ENCODE measurements at regions of chrX and their contacts with region 1.

Region 1: DNA sequence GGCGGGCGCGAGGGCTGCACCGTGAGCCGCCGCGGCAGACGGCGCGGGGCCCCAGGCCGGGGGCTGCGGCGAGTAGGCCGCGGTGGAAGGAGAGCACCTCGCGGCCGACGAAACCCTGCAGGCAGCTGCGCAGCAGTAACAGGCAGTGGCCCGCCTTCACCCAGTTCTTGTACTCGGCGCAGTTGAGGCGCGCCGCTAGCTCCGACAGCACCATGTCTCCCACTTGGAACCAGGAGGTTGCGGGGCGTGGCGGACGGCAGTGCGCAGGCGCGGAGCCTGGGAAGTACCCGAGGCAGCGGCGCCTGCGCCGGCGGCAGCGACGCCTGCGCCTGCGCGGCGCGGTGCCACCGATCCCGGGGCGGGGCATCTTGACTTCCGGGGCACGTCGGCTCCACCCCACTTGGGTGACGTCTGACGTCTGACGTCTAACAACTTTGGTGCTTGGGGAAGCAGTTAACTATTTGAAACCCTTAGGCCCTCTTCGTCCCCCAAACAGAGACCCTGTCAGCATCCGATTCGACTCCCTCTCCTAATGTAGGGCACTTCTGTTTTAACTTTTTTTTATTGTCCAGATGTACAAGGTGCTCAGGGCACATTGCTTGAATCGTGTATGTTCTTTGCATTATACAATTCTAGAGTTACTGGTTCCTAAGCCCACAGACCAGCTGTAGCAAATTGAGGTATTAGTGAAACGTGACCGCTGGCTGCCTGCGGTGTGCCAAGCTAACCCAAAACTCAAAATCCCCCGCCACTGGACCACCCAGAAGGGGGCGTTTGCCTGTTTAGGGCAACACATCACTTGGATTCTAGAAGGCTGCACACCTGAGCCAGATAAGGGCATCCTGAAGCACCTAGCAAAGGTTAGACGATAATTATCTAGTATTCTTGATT is at the start of gene CXorf38:
- DNase-seq: peak; percentile 57 to 84
- H3K4me3 ChIP-seq: peak within 1 kb of the TSS; percentile 62
- H3K27ac ChIP-seq: peak within 1 kb of the TSS; percentile 39; the same call in 1 of the 2 replicates
- H3K4me1 ChIP-seq: no peaks in the 10 kb centered on the region
- H3K27me3 ChIP-seq: no peaks in the 10 kb centered on the region
- CTCF ChIP-seq: no peak
- total RNA-seq, gene CXorf38: 5.3 and 8.1 TPM in 2 replicates

Region 2: GRCh38 chrX:40539214-40540142 is 108.1 kb before region 1 on chrX:
- CTCF ChIA-PET with region 1: interaction called, 3 read pairs
- POLR2A ChIA-PET with region 1: no interaction called
- intact Hi-C with region 1: loop called (anchors 10 kb)
- DNase-seq: no peak
- H3K4me3 ChIP-seq: no peak overlapping the region
- H3K27ac ChIP-seq: no peak overlapping the region
- H3K4me1 ChIP-seq: no peaks in the 10 kb centered on the region
- H3K27me3 ChIP-seq: no peaks in the 10 kb centered on the region
- CTCF ChIP-seq: no peak

Region 3: GRCh38 chrX:40622479-40623138 is 24.9 kb before region 1 on chrX:
- CTCF ChIA-PET with region 1: no interaction called
- POLR2A ChIA-PET with region 1: no interaction called
- intact Hi-C with region 1: no loop called
- DNase-seq: no peak
- H3K4me3 ChIP-seq: no peak overlapping the region
- H3K27ac ChIP-seq: no peak overlapping the region
- H3K4me1 ChIP-seq: no peaks in the 10 kb centered on the region
- H3K27me3 ChIP-seq: no peaks in the 10 kb centered on the region
- CTCF ChIP-seq: no peak

Region 4: DNA sequence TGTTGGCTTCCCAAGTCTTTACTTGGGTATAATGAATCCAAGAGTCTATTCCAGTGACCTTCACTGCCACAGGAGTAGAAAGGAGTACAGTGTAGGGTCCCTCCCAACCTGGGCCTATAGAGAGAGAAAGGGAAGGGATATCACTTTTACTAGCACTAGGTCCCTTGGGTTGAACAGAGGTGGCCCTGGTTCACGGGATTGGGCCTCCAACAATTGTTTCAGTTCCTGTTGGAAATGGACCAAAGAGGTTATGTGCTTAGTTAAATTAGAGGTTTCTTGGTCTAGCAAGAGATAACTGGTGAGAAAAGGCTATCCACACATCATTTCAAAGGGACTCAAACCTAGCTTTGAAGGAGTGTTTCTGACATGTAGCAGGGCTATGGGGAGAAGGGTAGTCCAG is 144.9 kb after region 1 on chrX:
- CTCF ChIA-PET with region 1: interaction called, 16 read pairs
- POLR2A ChIA-PET with region 1: no interaction called
- intact Hi-C with region 1: loop called (anchors 5 kb)
- DNase-seq: no peak
- H3K4me3 ChIP-seq: no peak overlapping the region
- H3K27ac ChIP-seq: no peak overlapping the region
- H3K4me1 ChIP-seq: peaks cover 5% of the 10 kb centered on the region; the same call in 1 of the 2 replicates
- H3K27me3 ChIP-seq: no peaks in the 10 kb centered on the region
- CTCF ChIP-seq: no peak

Region 5: DNA sequence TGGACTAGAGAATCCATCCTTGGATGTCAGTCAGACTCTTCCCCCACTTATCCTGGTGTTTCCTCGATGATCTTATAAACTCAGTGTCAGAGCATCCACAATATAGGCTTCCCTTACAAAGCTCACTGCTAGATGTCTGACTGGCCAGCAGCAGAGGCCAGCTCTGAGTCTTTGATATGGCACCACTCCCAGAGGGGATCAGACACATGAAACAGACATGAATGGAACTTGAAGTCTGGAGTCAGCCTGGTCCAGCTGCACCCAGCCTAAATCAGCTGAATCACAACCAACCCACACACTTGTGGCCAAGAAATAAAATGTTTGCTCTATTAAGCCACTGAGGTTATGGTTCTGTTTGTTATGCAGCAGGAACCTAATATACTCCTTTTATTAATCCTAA is 217.4 kb after region 1 on chrX:
- CTCF ChIA-PET with region 1: no interaction called
- POLR2A ChIA-PET with region 1: interaction called, 10 read pairs
- intact Hi-C with region 1: no loop called
- DNase-seq: no peak
- H3K4me3 ChIP-seq: no peak overlapping the region
- H3K27ac ChIP-seq: no peak overlapping the region
- H3K4me1 ChIP-seq: no peaks in the 10 kb centered on the region
- H3K27me3 ChIP-seq: no peaks in the 10 kb centered on the region
- CTCF ChIP-seq: no peak

Region 6: DNA sequence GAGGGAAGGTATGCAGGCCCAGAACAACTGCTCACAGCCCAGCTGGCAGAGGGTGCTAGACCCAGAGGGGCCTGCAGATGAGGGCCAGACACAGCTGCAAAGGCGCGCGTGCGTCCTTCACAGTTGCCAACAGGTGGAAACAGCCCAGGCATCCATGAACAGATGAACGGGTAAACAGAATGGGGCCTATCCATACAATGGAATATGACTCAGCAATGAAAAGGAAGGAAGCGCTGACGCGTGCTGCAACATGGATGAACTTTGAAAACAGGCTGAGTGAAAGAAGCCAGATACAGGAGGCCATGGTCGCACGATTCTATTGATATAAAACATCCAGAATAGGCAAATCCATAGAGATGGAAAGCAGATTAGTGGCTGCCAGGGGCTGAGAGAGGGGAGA is 603.3 kb after region 1 on chrX:
- CTCF ChIA-PET with region 1: no interaction called
- POLR2A ChIA-PET with region 1: no interaction called
- intact Hi-C with region 1: loop called (anchors 5 kb)
- DNase-seq: no peak
- H3K4me3 ChIP-seq: no peak overlapping the region
- H3K27ac ChIP-seq: no peak overlapping the region
- H3K4me1 ChIP-seq: no peaks in the 10 kb centered on the region
- H3K27me3 ChIP-seq: no peaks in the 10 kb centered on the region
- CTCF ChIP-seq: no peak

Region 7: DNA sequence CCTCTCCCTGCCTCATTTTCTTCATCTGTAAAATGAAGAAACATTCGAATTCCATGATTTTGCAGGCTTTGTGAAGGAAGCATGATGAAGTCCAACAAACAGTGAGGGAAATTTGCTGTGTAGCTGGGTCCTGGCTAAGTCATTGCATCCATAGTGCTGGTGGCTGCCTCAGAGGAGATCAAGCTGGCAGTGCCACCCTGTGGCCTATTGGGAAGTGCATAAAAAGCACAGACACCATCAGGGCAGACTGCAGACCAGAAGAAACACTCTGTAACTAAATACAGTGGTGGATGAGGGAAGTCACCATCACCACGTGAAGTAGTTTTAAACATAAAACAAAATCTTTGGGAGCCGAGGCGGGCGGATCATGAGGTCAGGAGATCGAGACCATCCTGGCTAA is 645.7 kb after region 1 on chrX:
- CTCF ChIA-PET with region 1: no interaction called
- POLR2A ChIA-PET with region 1: no interaction called
- intact Hi-C with region 1: no loop called
- DNase-seq: no peak
- H3K4me3 ChIP-seq: no peak overlapping the region
- H3K27ac ChIP-seq: no peak overlapping the region
- H3K4me1 ChIP-seq: no peaks in the 10 kb centered on the region
- H3K27me3 ChIP-seq: no peaks in the 10 kb centered on the region
- CTCF ChIP-seq: peak; percentile 34; the same call in 1 of the 2 replicates

Measured in PC-9 (cell line).